B cell (primary cell): ENCODE measurements at regions of chr10 and their contacts with region 1.

Region 1: GRCh38 chr10:45594276-45595106 is 78.1 kb downstream of the ZFAND4 start:
- DNase-seq: peak; percentile 95
- ATAC-seq: peak; percentile 88
- H3K4me3 ChIP-seq: peak overlapping the region; percentile 72 to 86 (median 83)
- H3K4me3 Mint-ChIP-seq: peak overlapping the region; percentile 96
- H3K27ac ChIP-seq: peak overlapping the region; percentile 87 to 88
- H3K27ac Mint-ChIP-seq: peak overlapping the region; percentile 98
- H3K4me1 ChIP-seq: peaks cover 26% of the 10 kb centered on the region in 2 donors
- H3K4me1 Mint-ChIP-seq: peaks cover 38% of the 10 kb centered on the region
- H3K27me3 ChIP-seq: no peaks in the 10 kb centered on the region
- H3K27me3 Mint-ChIP-seq: peaks cover 6% of the 10 kb centered on the region
- CTCF ChIP-seq: no peak

Region 2: DNA sequence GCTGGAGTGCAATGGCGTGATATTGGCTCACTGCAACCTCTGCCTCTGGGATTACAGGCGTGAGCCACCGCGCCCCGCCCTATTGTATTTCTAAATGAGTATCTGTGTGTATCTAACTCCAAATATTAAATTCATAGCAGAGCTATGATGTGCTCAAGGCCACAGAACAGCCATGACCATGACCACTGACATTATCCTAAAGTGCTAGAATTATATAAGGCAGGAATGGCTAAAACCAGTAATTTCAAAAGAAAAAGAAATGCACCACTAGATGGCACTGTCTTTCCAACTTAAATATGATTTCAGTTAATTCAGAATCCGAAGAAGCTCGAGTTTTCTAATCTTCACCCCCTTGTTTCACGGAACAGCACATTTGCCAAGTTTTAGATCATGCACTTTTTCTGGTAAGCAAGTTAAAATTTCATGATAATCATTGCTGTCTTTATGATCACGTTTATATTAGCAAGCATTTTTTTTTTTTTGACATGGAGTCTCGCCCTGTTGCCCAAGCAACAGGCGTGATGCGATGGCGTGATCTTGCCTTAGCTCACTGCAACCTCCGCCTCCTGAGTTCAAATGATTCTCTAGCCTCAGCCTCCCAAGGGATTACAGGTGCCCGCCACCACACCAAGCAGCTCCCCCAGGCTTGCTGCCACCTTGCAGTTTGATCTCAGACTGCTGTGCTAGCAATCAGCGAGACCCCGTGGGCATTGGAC is 344.4 kb before region 1 on chr10:
- CTCF ChIA-PET with region 1: interaction called, 3 read pairs
- POLR2A ChIA-PET with region 1: no interaction called
- intact Hi-C with region 1: loop called (anchors 5 kb)
- DNase-seq: peak; percentile 82
- ATAC-seq: peak; percentile 90
- H3K4me3 ChIP-seq: peak overlapping the region in 4 of 5 experiments; percentile 1 to 56 (median 44)
- H3K4me3 Mint-ChIP-seq: peak overlapping the region; percentile 86
- H3K27ac ChIP-seq: peak overlapping the region; percentile 0 to 60
- H3K27ac Mint-ChIP-seq: peak overlapping the region; percentile 82
- H3K4me1 ChIP-seq: peaks cover 15 to 18% of the 10 kb centered on the region in 2 donors
- H3K4me1 Mint-ChIP-seq: peaks cover 26% of the 10 kb centered on the region
- H3K27me3 ChIP-seq: no peaks in the 10 kb centered on the region
- H3K27me3 Mint-ChIP-seq: peaks cover 7% of the 10 kb centered on the region
- CTCF ChIP-seq: peak; percentile 83

Region 3: DNA sequence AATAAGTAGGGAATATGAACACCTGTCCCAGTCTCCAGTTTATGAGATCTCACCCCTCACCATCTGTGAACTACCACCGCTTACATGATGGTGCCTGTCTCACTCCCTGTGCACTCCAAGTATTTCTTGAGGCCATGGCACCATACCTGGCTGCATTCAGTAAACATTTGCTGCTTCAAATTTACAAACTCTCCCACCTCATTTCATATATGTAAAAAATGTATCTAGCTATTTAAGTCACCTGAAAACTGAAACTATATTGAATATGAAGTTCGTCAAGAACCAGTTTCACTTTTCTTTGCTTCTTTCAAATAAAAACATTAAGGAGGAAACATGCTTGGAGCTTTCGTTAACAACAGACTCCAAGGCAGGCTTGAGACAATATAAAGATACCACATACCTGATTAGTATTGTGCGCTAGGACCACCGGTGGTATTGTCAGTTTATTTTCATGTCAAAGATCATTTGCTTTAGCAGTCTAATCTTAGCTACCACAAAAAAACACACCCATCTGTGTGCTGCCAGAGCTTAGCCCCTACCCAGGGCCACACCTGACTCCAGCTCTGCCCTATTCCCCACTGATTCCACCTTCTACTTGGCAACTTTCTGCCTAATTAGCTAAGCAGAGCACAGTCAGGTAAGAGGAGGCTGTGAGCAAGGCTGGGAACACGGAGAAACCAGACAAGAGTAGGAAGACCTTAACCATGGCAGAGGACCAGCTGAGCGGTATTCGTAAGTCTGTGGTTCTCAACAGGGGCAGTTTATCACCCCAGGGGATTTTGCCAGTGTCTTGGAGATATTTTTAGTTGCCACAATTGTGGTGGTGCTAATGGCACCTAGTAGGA is 13.9 kb before region 1 on chr10:
- CTCF ChIA-PET with region 1: interaction called, 8 read pairs
- POLR2A ChIA-PET with region 1: interaction called, 7 read pairs
- intact Hi-C with region 1: loop called (anchors 1 kb)
- DNase-seq: peak; percentile 65
- ATAC-seq: peak; percentile 79
- H3K4me3 ChIP-seq: peak overlapping the region; percentile 40 to 79 (median 59)
- H3K4me3 Mint-ChIP-seq: peak overlapping the region; percentile 95
- H3K27ac ChIP-seq: peak overlapping the region; percentile 92 to 93
- H3K27ac Mint-ChIP-seq: peak overlapping the region; percentile 95
- H3K4me1 ChIP-seq: peaks cover 19 to 36% of the 10 kb centered on the region in 2 donors
- H3K4me1 Mint-ChIP-seq: peaks cover 50% of the 10 kb centered on the region
- H3K27me3 ChIP-seq: no peaks in the 10 kb centered on the region
- H3K27me3 Mint-ChIP-seq: no peaks in the 10 kb centered on the region
- CTCF ChIP-seq: no peak